MCF 10A (cell line): ENCODE measurements at regions of chrX and their contacts with region 1.

Region 1: DNA sequence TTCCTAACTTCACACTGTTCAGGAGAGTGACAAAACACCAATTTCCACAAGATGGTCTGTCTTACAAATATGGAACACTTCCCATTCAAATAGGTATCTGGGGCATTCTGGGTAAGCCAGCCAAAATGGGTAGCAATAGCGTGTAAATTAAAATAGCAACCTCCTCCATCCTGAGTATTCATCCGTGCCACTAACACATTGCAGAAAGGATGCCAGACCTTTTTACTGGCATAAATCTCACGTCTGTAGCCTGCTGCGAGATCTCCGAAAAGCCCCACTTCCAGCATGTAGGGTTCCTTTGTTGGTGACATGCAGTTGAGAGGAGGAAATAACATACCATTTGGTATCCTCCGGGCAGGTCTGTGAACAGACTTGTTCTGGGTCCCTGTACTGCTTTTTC is 52.7 kb upstream of the RAI2 start:
- DNase-seq: no peak
- H3K4me3 Mint-ChIP-seq: no peak overlapping the region
- H3K27ac Mint-ChIP-seq: no peak overlapping the region
- H3K4me1 Mint-ChIP-seq: no peaks in the 10 kb centered on the region
- H3K27me3 Mint-ChIP-seq: no peaks in the 10 kb centered on the region
- CTCF ChIP-seq: no peak

Region 2: DNA sequence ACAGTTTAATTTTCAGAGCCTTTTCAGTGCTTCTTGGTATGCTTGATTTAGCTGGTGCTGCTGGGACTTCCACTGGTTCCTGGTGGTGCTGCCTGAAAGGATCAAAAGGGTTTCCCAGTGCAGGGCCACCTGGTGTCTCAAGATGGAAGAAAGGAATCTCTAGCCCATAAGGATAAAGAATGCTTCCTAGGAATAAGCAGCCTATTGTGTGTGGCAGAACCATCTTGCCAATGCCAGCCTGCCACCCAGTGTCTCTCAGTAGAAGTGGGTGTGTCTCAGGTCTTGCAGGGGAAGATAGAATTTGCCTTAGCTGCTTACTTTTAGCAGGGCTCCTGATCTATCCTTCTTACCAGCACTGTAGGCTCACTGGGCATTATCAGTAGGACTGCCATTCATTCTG is 37.6 kb before region 1 on chrX:
- CTCF ChIA-PET with region 1: no interaction called
- POLR2A ChIA-PET with region 1: no interaction called
- intact Hi-C with region 1: no loop called
- DNase-seq: peak; percentile 16
- H3K4me3 Mint-ChIP-seq: no peak overlapping the region
- H3K27ac Mint-ChIP-seq: no peak overlapping the region
- H3K4me1 Mint-ChIP-seq: no peaks in the 10 kb centered on the region
- H3K27me3 Mint-ChIP-seq: peaks cover 39% of the 10 kb centered on the region
- CTCF ChIP-seq: no peak

Region 3: DNA sequence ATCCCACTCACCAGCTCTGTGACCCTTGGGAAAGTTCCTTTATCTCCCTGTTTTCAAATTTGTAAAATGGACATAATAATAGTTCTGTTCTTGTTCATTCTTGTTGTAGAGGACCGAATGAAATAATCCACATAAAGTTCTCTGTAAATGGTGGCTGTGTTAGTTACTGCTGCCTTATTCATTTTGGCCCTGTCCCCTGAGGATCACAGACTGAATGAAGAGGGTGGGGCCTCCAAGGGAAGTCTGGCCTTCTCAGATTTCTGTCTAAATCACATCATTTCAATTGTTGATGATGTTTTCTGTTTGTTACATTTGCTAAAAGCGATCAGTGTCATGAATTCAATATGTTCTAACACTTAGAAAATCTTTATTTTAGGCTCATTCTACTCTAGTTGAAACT is 911.6 kb after region 1 on chrX:
- CTCF ChIA-PET with region 1: interaction called, 10 read pairs
- POLR2A ChIA-PET with region 1: no interaction called
- intact Hi-C with region 1: no loop called
- DNase-seq: no peak
- H3K4me3 Mint-ChIP-seq: no peak overlapping the region
- H3K27ac Mint-ChIP-seq: no peak overlapping the region
- H3K4me1 Mint-ChIP-seq: no peaks in the 10 kb centered on the region
- H3K27me3 Mint-ChIP-seq: no peaks in the 10 kb centered on the region
- CTCF ChIP-seq: no peak